ENCODE measurements at regions of chr20 and their contacts with region 1.

Region 1: GRCh38 chr20:16007164-16007563 is 566.1 kb downstream of the KIF16B start:
- DNase-seq: no peak
- H3K4me3 ChIP-seq: no peak overlapping the region
- H3K27ac ChIP-seq: no peak overlapping the region
- H3K4me1 ChIP-seq: peaks cover 2 to 5% (median 3%) of the 10 kb centered on the region in 4 experiments; a peak in 4 of 7 replicates
- H3K27me3 ChIP-seq: no peaks in the 10 kb centered on the region
- CTCF ChIP-seq: no peak
- EP300 ChIP-seq: no peak
- POLR2A ChIP-seq: no peak
- RAD21 ChIP-seq: no peak

Region 2: DNA sequence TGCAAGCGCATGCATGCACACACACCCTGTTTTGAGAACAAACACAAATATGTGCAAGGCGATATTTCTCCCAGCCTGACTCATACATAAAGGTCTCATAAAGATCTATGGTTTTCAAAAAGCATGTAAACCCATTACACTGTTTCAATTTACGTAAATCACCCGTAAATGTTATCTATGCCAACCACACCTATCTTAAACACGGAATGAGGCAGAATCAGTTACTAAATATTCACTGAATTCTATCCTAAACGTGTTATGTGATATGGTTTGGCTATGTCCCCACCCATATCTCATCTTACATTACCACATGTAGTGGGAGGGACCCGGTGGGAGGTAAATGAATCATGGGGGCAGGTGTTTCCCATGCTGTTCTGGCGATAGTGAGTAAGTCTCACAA is 55.5 kb before region 1 on chr20:
- CTCF ChIA-PET with region 1: no interaction called
- POLR2A ChIA-PET with region 1: no interaction called
- DNase-seq: no peak
- H3K4me3 ChIP-seq: no peak overlapping the region
- H3K27ac ChIP-seq: no peak overlapping the region
- H3K4me1 ChIP-seq: peaks cover 0 to 7% (median under 1%) of the 10 kb centered on the region in 4 experiments; a peak in 2 of 7 replicates
- H3K27me3 ChIP-seq: no peaks in the 10 kb centered on the region
- CTCF ChIP-seq: no peak
- EP300 ChIP-seq: no peak
- POLR2A ChIP-seq: no peak
- RAD21 ChIP-seq: no peak

Region 3: GRCh38 chr20:16020971-16021370 is 13.8 kb after region 1 on chr20:
- CTCF ChIA-PET with region 1: interaction called, 10 read pairs
- POLR2A ChIA-PET with region 1: no interaction called
- DNase-seq: no peak
- H3K4me3 ChIP-seq: no peak overlapping the region
- H3K27ac ChIP-seq: no peak overlapping the region
- H3K4me1 ChIP-seq: no peaks in the 10 kb centered on the region
- H3K27me3 ChIP-seq: no peaks in the 10 kb centered on the region
- CTCF ChIP-seq: no peak
- EP300 ChIP-seq: no peak
- POLR2A ChIP-seq: no peak
- RAD21 ChIP-seq: no peak

Region 4: DNA sequence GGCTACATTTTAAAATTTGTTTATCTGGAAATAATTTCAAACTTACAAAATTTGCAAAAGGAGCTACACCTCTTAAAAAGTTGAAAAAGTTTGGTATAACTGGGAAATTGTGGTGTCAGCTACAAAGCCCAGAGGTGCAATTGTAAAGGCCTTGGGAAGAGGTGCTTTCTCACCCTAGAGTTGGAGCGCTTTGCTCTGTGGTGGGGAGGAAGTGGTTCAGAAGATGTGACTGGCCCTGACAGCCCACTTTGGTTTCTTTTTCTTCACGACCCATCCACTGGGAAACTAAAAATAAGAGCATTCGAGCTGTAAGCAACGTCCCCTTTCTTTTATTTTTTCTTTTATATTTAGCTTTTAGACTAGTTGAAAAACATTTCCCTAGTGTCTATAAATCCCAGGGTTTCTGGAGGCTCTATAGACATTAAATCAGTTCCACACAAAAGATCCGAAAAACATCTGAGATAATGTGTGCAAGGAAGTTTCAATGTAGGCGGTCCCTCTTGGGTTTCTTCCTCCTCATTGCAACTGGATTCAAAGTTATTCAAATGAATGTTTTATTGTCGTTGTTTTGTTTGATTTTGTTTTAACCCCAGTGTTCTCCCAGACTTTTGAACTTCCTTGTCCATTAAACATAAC is 168.3 kb after region 1 on chr20:
- CTCF ChIA-PET with region 1: no interaction called
- POLR2A ChIA-PET with region 1: no interaction called
- DNase-seq: no peak
- H3K4me3 ChIP-seq: no peak overlapping the region
- H3K27ac ChIP-seq: no peak overlapping the region
- H3K4me1 ChIP-seq: no peaks in the 10 kb centered on the region
- H3K27me3 ChIP-seq: no peaks in the 10 kb centered on the region
- CTCF ChIP-seq: no peak
- EP300 ChIP-seq: no peak
- POLR2A ChIP-seq: no peak
- RAD21 ChIP-seq: no peak